ENCODE measurements at regions of chr11 and their contacts with region 1.

Region 1: GRCh38 chr11:10366568-10367370 is 61.9 kb downstream of the ADM start:
- DNase-seq: peak; percentile 43 to 90
- H3K4me3 ChIP-seq: no peak overlapping the region
- H3K27ac ChIP-seq: peak overlapping the region in 1 of 2 donors; percentile 40
- H3K4me1 ChIP-seq: no peaks in the 10 kb centered on the region
- H3K27me3 ChIP-seq: no peaks in the 10 kb centered on the region
- CTCF ChIP-seq: peak; percentile 79 to 92 (median 81)

Region 2: GRCh38 chr11:9990221-9990975 is 376.4 kb before region 1 on chr11:
- intact Hi-C with region 1: loop called (anchors 5 kb)
- DNase-seq: no peak
- H3K4me3 ChIP-seq: no peak overlapping the region
- H3K27ac ChIP-seq: no peak overlapping the region
- H3K4me1 ChIP-seq: no peaks in the 10 kb centered on the region
- H3K27me3 ChIP-seq: no peaks in the 10 kb centered on the region
- CTCF ChIP-seq: peak in 1 of 3 experiments; percentile 43

Region 3: DNA sequence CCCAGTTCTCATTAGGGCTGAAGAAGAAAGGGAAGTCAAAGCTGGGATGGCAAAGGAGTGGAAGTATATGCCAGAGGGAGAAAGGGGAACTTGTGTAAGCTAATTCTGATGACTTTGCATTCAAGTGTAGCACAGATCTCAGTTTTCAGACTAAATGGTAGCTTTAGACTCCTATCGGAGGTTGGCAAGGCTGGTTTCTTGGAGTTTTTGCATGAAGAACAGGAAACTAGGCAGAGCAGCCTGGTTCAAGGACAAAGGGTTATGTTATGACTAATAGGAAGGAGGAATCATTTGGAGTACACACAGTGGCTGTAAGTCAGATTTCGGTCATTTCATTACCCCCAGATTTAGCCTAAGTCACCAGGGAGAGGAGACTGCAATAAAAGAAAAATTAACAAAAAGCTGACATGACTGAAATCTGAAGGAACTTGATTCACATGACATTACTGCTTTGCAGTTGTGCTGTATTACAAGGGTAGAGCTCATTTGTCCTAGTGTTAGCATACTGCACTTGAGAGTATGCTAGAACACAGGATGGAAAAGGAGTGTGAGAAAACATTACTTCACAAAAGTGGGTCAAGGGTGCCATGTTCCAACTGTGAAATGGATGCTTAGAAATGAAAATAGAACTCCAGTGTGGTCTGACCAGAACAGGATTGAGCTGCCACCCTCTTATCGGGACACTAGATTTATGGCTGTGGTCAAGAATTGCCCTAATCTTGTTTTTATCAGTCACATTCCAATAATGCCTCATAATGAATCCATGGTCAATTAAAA is 38.3 kb before region 1 on chr11:
- intact Hi-C with region 1: loop called (anchors 5 kb)
- DNase-seq: no peak
- H3K4me3 ChIP-seq: no peak overlapping the region
- H3K27ac ChIP-seq: peak overlapping the region; percentile 23 to 81
- H3K4me1 ChIP-seq: peaks cover 8 to 38% of the 10 kb centered on the region in 2 donors
- H3K27me3 ChIP-seq: no peaks in the 10 kb centered on the region
- CTCF ChIP-seq: no peak

Measured in ascending aorta (tissue), 2 donors.